Posterior cingulate gyrus (tissue), 11 donors: ENCODE measurements at regions of chr9 and their contacts with region 1.

Region 1: DNA sequence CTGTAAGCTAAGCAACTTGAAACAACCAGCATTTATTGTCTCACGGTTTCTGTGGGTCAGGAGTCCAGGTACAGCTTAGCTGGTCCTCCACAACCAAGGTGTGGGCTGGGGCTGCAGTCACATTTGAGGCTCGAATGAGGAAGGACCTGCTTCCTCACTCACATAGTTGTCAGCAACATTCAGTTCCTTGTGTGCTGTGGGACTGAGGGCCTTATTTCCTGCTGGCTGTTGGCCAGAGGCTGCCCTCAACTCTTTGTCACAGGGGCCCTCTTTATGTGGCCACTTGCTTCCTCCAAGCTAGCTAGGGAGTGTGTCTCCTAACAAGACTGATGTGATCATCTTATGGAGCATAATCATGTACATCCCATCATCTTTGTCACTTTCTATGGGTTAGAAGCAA is 29.2 kb upstream of the SEMA4D start:
- DNase-seq: no peak

Region 2: GRCh38 chr9:89489548-89490530 is 37.2 kb before region 1 on chr9:
- intact Hi-C with region 1: loop called (anchors 5 kb)
- DNase-seq: no peak

Region 3: DNA sequence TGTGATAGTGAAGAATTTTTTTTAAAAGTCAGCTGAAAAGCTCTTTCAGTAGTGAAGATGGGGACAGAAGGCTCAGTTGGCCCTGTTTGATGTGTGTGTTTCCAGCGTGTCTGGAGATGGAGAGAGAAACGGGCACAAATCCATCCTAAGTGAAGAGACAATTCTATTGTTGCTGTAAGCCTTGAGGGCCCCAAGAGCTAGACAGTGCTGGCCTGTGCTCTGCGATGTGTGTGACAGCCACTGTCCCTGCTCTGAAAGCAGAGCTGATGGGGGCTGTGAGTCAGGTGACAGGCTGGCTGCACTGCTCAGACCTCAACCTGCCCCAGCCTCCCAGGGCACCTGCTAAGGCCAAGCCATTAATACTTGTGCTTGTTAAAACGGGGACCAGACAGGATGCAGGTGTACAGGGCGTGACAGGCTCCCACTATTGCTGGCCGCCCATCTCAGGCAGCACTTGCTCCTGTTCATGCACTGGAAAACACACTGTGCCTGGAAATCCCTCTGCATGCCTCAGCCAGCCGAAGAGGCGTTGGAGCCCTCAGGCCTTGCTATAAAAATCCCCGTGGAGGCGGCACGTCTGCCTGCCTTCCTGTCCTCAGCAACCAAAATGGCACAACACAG is 15.4 kb after region 1 on chr9:
- intact Hi-C with region 1: loop called (anchors 2 kb)
- DNase-seq: peak; percentile 48 to 95 (median 68)